H1 (cell line): ENCODE measurements at regions of chr17 and their contacts with region 1.

Region 1: DNA sequence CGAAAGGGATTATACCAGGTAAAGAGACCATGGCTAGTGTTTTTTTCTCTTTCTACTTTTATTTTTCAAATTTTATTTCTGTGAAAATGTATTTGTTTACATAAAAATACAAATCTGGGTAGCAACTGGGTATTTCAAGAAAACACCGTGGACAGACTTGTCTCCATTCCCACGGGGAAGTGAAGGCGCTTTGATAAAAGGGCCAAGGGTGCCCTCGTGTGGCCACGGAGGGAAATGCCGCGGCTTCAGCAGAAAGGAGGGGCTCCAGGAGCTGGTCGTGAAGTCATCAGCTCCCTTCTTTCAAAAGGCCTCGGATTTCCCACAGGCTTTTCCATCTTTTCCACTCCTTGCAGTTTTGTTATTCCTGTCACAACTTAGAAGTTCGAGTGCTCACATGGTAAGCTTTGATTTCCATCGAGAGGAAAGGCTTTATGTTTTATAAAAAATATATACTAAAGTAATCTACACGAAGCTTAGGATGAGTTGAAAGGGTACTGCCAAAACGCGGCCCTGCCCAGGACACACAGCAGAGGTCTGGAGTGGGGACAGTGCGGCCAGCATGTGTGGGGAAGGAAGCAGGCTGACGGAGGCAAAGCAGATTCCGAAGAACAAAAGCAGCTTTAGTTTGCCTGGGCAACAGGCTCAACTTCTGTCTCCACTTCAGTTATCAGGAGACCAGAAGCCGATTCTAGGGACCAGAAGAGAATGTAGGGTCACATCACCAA is 15.3 kb upstream of the MNT start:
- DNase-seq: peak in 1 of 2 experiments; percentile 98
- H3K4me3 ChIP-seq: no peak overlapping the region
- H3K27ac ChIP-seq: no peak overlapping the region
- H3K4me1 ChIP-seq: no peaks in the 10 kb centered on the region
- H3K27me3 ChIP-seq: no peaks in the 10 kb centered on the region
- CTCF ChIP-seq: peak; percentile 82 to 91 (median 88)
- EP300 ChIP-seq: no peak
- POLR2A ChIP-seq: no peak
- RAD21 ChIP-seq: peak; percentile 89 to 91

Region 2: GRCh38 chr17:2363851-2364762 is 52.1 kb before region 1 on chr17:
- CTCF ChIA-PET with region 1: interaction called, 42 read pairs
- POLR2A ChIA-PET with region 1: interaction called, 5 read pairs
- DNase-seq: no peak
- H3K4me3 ChIP-seq: no peak overlapping the region
- H3K27ac ChIP-seq: no peak overlapping the region
- H3K4me1 ChIP-seq: peaks cover 0 to 2% (median 0%) of the 10 kb centered on the region in 4 experiments; a peak in 3 of 7 replicates
- H3K27me3 ChIP-seq: no peaks in the 10 kb centered on the region
- CTCF ChIP-seq: no peak
- EP300 ChIP-seq: no peak
- POLR2A ChIP-seq: no peak
- RAD21 ChIP-seq: no peak

Region 3: DNA sequence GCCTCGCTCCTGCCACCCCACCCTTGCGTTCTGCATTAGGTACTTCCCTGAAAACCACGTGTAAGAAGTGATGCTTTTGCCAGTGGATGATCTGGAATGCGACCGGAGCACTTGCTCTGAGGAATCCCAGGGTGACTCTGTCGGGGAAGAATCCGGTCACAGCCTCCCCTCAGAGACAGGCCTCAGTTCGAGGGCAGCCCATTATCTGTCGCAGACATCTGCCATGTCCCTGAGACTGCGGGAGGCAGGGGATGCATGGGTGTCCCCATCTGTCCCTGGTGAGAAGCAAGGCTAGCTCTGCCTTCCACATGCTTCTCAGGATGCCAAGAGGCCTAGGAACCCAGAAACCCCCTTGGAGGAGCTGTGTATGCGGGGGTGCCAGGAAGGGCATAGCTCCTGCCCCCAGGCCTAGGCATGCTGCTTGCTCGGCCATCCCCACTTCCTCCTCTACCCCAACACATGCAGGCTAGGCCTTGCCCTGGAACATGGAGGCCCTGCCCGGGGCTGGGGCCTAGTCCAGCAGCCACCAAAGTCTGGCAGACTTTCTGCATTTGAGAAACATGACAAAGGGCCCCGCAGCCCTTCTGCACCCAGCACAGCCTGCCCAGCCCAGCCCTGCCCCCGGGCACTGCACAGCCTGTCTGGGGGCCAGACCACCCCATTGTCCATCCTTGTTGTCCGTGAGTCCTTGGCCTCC is 35.8 kb before region 1 on chr17:
- CTCF ChIA-PET with region 1: interaction called, 216 read pairs
- POLR2A ChIA-PET with region 1: interaction called, 14 read pairs
- DNase-seq: no peak
- H3K4me3 ChIP-seq: no peak overlapping the region
- H3K27ac ChIP-seq: no peak overlapping the region
- H3K4me1 ChIP-seq: peaks cover 0 to 10% (median 4%) of the 10 kb centered on the region in 4 experiments; a peak in 5 of 7 replicates
- H3K27me3 ChIP-seq: no peaks in the 10 kb centered on the region
- CTCF ChIP-seq: no peak
- EP300 ChIP-seq: no peak
- POLR2A ChIP-seq: no peak
- RAD21 ChIP-seq: no peak

Region 4: GRCh38 chr17:2392252-2393173 is 23.7 kb before region 1 on chr17:
- CTCF ChIA-PET with region 1: interaction called, 17 read pairs
- POLR2A ChIA-PET with region 1: interaction called, 10 read pairs
- DNase-seq: peak; percentile 83 to 97
- H3K4me3 ChIP-seq: peak overlapping the region; percentile 64 to 85 (median 76)
- H3K27ac ChIP-seq: peak overlapping the region; percentile 56; the same call in 1 of the 2 replicates
- H3K4me1 ChIP-seq: peaks cover 14 to 37% (median 22%) of the 10 kb centered on the region in 4 experiments
- H3K27me3 ChIP-seq: no peaks in the 10 kb centered on the region
- CTCF ChIP-seq: no peak
- EP300 ChIP-seq: no peak
- POLR2A ChIP-seq: 0 out of 3 replicates have a peak, but pooled peaks of 1 of the 2 experiments have one; percentile 38
- RAD21 ChIP-seq: no peak

Region 5: DNA sequence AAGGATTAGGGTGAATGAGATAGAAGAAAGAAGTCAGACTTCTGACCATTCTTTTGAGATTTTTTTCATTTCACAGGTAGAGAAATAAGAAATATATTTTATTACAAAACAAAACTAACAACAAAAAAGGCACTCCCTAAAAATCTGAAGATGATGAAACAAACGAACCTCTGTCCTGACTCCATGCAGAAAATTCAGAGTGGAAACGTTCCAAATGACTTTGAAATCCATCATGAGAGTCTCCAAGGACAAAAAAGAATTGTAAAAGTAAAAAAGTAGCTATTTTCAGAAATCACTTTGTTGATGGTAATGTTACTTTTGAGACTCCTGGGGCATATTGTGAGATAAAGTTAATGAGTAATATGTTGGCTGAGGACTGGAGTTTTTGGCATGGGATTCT is 11.0 kb after region 1 on chr17:
- CTCF ChIA-PET with region 1: interaction called, 10 read pairs
- POLR2A ChIA-PET with region 1: no interaction called
- DNase-seq: no peak
- H3K4me3 ChIP-seq: no peak overlapping the region
- H3K27ac ChIP-seq: no peak overlapping the region
- H3K4me1 ChIP-seq: no peaks in the 10 kb centered on the region
- H3K27me3 ChIP-seq: no peaks in the 10 kb centered on the region
- CTCF ChIP-seq: no peak
- EP300 ChIP-seq: no peak
- POLR2A ChIP-seq: no peak
- RAD21 ChIP-seq: no peak

Region 6: DNA sequence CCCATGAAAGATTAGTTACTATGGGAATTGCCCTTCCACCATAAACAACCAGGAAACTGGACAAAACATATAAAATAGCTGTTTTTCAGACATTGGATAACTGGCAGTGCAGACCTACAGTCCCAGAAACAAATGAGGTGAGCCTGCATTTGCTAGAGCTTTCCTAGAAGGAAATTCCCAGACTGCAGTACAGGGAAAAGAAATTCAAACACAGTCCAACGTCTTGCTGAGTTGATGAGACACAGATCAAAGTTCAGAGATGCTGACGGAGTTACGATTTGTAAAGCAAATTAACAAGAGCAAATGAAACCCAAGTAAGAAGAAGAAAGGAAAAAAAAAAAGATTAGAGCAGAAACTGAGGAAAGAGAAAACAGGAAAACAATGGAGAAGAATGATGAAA is 26.0 kb after region 1 on chr17:
- CTCF ChIA-PET with region 1: no interaction called
- POLR2A ChIA-PET with region 1: no interaction called
- DNase-seq: no peak
- H3K4me3 ChIP-seq: no peak overlapping the region
- H3K27ac ChIP-seq: no peak overlapping the region
- H3K4me1 ChIP-seq: no peaks in the 10 kb centered on the region
- H3K27me3 ChIP-seq: no peaks in the 10 kb centered on the region
- CTCF ChIP-seq: no peak
- EP300 ChIP-seq: no peak
- POLR2A ChIP-seq: no peak
- RAD21 ChIP-seq: no peak

Region 7: GRCh38 chr17:2500446-2500845 is 84.3 kb after region 1 on chr17:
- CTCF ChIA-PET with region 1: no interaction called
- POLR2A ChIA-PET with region 1: no interaction called
- DNase-seq: no peak
- H3K4me3 ChIP-seq: no peak overlapping the region
- H3K27ac ChIP-seq: no peak overlapping the region
- H3K4me1 ChIP-seq: no peaks in the 10 kb centered on the region
- H3K27me3 ChIP-seq: no peaks in the 10 kb centered on the region
- CTCF ChIP-seq: no peak
- EP300 ChIP-seq: no peak
- POLR2A ChIP-seq: no peak
- RAD21 ChIP-seq: no peak